Activated CD4-positive, alpha-beta T cell treated with anti-CD3 and anti-CD28 coated beads, Interleukin-2, amount 10 ng/mL, durations not matched to agents 7 days and 5 days (primary cell): ENCODE measurements at regions of chr3 and their contacts with region 1.

Region 1: GRCh38 chr3:124903907-124904834 is 17.0 kb upstream of the ITGB5 start:
- DNase-seq: no peak
- H3K4me3 Mint-ChIP-seq: no peak overlapping the region
- H3K27ac Mint-ChIP-seq: no peak overlapping the region
- H3K4me1 Mint-ChIP-seq: peaks cover 8% of the 10 kb centered on the region
- H3K27me3 Mint-ChIP-seq: peaks cover 18% of the 10 kb centered on the region

Region 2: GRCh38 chr3:124761250-124761796 is 142.8 kb before region 1 on chr3:
- CTCF ChIA-PET with region 1: interaction called, 40 read pairs
- POLR2A ChIA-PET with region 1: no interaction called
- DNase-seq: peak; percentile 82
- H3K4me3 Mint-ChIP-seq: peak overlapping the region; percentile 14
- H3K27ac Mint-ChIP-seq: no peak overlapping the region
- H3K4me1 Mint-ChIP-seq: peaks cover 7% of the 10 kb centered on the region
- H3K27me3 Mint-ChIP-seq: no peaks in the 10 kb centered on the region

Region 3: DNA sequence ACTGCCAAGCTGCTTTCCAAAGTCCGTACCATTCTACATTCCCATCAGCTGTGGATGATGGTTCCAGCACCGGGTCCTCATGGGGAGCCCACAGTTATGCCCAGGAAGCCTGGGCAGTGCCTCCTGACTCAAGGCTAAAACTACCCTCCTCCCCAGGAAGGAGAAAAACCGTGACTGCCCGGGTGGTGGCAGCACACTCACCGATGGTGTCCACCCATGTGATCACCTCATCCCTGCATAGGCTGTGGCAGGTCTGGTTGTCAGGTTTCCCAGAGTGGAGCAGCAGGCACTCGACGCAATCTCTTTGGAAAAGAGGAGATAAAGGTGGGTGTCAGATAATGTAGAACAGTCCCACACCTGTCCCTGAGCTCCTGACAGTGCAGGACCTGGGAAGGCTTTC is 135.4 kb before region 1 on chr3:
- CTCF ChIA-PET with region 1: interaction called, 19 read pairs
- POLR2A ChIA-PET with region 1: no interaction called
- DNase-seq: no peak
- H3K4me3 Mint-ChIP-seq: no peak overlapping the region
- H3K27ac Mint-ChIP-seq: no peak overlapping the region
- H3K4me1 Mint-ChIP-seq: no peaks in the 10 kb centered on the region
- H3K27me3 Mint-ChIP-seq: peaks cover 17% of the 10 kb centered on the region

Region 4: GRCh38 chr3:124786441-124787241 is 117.5 kb before region 1 on chr3:
- CTCF ChIA-PET with region 1: interaction called, 10 read pairs
- POLR2A ChIA-PET with region 1: no interaction called
- DNase-seq: no peak
- H3K4me3 Mint-ChIP-seq: no peak overlapping the region
- H3K27ac Mint-ChIP-seq: no peak overlapping the region
- H3K4me1 Mint-ChIP-seq: no peaks in the 10 kb centered on the region
- H3K27me3 Mint-ChIP-seq: peaks cover 8% of the 10 kb centered on the region

Region 5: DNA sequence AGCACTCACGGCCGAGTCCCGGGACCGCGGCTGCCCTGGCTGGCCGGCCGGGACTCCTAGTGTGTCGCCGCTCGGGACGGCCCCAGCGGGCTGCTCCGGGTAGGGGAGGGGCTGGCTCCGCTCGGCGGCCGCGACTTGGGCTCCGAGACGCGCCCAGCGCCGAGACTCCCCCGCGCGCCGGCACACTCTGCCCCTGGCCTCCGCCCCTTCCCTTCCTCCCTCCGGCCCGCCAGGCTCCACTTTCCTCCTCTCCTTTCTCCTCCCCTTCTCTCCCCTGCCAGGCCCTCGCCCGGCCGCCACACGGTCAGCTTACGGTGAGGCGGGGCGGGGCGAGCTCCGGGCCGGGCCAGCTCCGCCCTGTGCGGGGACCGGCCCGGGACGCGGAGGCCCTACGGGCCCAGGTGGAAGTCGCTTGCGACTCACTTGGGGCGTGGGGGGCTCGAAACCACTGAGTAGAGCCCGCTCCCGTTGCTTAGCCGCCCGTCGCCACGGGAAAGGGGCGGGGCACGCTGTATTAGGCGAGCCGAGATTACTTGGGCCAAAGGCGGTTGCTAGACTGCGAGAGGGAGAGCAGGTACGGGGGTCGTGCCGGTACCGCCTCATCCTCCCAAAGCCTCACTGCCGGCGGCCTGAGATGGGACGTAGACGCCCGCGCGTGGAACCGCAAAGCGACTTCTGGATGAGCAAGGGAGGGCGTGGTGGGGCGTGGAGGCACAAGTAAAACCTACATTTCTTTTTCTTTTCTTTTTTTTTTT is 16.8 kb before region 1 on chr3 and contains the start of gene ITGB5:
- CTCF ChIA-PET with region 1: interaction called, 25 read pairs
- POLR2A ChIA-PET with region 1: no interaction called
- DNase-seq: peak; percentile 10
- H3K4me3 Mint-ChIP-seq: peak within 1 kb of the TSS; percentile 54
- H3K27ac Mint-ChIP-seq: no peak within 1 kb of the TSS
- H3K4me1 Mint-ChIP-seq: peaks cover 4% of the 10 kb centered on the region
- H3K27me3 Mint-ChIP-seq: peaks cover 64% of the 10 kb centered on the region
- total RNA-seq, gene ITGB5: 0.15 to 0.37 TPM

Region 6: DNA sequence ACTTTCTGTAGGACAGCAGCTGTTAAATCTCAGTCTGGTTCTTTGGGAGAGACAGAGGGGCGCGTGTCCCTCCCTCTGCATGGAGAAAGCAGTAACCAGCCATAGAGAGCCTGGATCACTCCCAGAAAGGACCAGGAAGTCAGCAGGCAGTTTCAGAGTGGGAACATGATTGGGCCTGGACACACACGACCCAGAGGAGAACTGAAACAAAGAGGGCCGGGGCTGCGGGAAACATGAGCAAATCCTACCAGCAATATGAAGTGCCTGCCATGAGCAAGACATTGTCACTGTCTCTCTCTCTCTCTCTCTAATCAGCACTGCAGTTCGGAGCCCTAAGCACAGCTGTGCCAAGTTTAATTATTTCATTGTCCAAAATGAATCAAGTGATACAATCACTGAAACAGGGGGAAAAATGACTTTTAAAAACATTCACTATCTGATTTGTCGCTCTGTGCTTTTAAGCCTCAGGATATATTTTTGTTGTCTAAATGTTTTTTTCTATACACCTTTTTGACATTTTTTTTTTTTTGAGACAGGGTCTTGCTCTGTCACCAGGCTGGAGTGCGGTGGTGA is 12.8 kb after region 1 on chr3:
- CTCF ChIA-PET with region 1: interaction called, 12 read pairs
- POLR2A ChIA-PET with region 1: no interaction called
- DNase-seq: no peak
- H3K4me3 Mint-ChIP-seq: no peak overlapping the region
- H3K27ac Mint-ChIP-seq: no peak overlapping the region
- H3K4me1 Mint-ChIP-seq: no peaks in the 10 kb centered on the region
- H3K27me3 Mint-ChIP-seq: peaks cover 7% of the 10 kb centered on the region

Region 7: DNA sequence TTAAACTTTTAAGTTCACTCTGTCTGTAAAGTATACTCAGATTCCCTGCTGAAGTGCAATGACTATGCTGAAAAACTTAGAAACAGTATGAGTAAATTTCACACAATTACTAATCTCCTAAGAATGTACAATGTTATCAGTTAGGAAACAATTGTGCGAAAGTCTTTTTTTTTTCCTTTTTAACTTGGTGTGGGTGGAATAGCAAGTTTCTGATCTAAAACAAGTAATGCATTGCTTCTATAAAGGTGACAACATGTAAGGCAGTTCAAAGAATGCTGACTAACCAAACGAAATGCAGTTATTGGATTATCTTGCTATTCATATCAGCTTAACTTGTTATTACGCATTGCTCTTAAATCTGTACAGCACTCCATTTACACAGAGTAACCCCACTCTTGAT is 327.7 kb after region 1 on chr3:
- CTCF ChIA-PET with region 1: no interaction called
- POLR2A ChIA-PET with region 1: no interaction called
- DNase-seq: no peak
- H3K4me3 Mint-ChIP-seq: no peak overlapping the region
- H3K27ac Mint-ChIP-seq: no peak overlapping the region
- H3K4me1 Mint-ChIP-seq: peaks cover 6% of the 10 kb centered on the region
- H3K27me3 Mint-ChIP-seq: no peaks in the 10 kb centered on the region